ENCODE measurements at regions of chr10 and their contacts with region 1.

Region 1: DNA sequence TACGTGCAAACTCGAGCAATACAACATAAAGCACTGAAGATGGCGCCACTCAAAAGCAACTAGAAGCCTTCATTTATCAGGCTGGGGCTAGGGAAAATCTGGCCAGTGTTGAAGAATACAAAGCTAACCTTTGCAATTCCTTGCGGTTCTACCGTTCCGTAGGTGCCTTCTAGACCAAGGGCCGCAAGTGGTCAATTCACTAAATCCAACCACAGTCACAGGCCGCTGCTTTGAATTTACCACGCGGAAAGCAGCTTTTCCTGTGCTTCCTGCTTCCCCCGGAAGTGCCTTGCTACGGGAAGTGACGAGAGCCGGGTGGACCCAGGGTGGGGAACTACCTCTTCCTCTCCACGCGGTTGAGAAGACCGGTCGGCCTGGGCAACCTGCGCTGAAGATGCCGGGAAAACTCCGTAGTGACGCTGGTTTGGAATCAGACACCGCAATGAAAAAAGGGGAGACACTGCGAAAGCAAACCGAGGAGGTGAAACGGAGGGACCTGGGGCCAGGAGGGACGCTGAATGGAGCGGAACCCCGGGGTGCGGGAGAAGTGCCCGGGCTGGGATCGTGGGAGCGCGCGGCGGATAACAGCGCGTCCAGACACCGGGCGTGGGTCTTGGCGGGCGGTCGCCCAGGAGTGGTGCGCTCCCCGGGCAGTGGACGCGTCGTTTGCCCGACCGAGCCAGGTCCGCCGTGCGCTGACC is at the start of gene DDX21:
- DNase-seq: peak; percentile 94
- H3K4me3 Mint-ChIP-seq: peak within 1 kb of the TSS; percentile 97
- H3K27ac Mint-ChIP-seq: peak within 1 kb of the TSS; percentile 99
- H3K4me1 Mint-ChIP-seq: peaks cover 39% of the 10 kb centered on the region
- H3K27me3 Mint-ChIP-seq: no peaks in the 10 kb centered on the region
- total RNA-seq, gene DDX21: 156 to 158 TPM

Region 2: DNA sequence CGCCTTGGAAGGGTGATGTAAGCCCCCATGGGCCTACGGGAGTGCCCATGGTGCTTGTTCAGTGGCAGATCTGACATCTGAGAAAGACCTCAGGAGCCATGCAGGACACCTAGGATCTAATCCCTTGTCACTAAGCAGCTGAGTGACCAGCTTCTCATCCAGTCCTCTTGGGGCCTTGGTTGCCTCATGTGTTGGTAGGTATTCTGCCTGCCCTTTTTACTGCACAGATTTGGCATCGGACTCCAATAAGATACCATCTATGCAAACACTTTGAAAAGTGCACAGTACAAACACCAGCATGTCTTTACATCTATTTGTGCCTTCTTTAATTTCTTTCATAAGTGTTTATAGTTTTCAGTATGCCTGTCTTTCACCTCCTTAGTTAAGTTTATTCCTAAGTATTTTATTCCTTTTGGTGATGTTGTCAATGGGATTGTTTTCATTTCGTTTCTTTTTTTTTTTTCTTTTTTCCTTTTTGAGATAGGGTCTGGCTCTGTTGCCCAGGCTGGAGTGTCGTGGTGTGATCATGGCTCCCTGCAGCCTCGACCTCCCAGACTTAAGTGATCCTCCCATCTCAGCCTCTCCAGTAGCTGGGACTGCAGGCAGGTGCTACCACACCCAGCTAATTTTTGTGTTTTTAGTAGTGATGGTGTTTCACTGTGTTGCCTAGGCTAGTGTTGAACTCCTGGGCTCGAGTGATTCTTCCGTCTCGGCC is 118.2 kb before region 1 on chr10:
- CTCF ChIA-PET with region 1: no interaction called
- POLR2A ChIA-PET with region 1: no interaction called
- intact Hi-C with region 1: no loop called
- DNase-seq: no peak
- H3K4me3 Mint-ChIP-seq: no peak overlapping the region
- H3K27ac Mint-ChIP-seq: no peak overlapping the region
- H3K4me1 Mint-ChIP-seq: no peaks in the 10 kb centered on the region
- H3K27me3 Mint-ChIP-seq: no peaks in the 10 kb centered on the region

Region 3: GRCh38 chr10:68988530-68989316 is 32.7 kb after region 1 on chr10 and contains the start of gene KIFBP:
- CTCF ChIA-PET with region 1: interaction called, 11 read pairs
- POLR2A ChIA-PET with region 1: interaction called, 19 read pairs
- intact Hi-C with region 1: loop called (anchors 1 kb)
- DNase-seq: peak; percentile 93
- H3K4me3 Mint-ChIP-seq: peak within 1 kb of the TSS; percentile 92
- H3K27ac Mint-ChIP-seq: peak within 1 kb of the TSS; percentile 83
- H3K4me1 Mint-ChIP-seq: peaks cover 49% of the 10 kb centered on the region
- H3K27me3 Mint-ChIP-seq: no peaks in the 10 kb centered on the region
- total RNA-seq, gene KIFBP: 23.0 to 25.2 TPM

Region 4: DNA sequence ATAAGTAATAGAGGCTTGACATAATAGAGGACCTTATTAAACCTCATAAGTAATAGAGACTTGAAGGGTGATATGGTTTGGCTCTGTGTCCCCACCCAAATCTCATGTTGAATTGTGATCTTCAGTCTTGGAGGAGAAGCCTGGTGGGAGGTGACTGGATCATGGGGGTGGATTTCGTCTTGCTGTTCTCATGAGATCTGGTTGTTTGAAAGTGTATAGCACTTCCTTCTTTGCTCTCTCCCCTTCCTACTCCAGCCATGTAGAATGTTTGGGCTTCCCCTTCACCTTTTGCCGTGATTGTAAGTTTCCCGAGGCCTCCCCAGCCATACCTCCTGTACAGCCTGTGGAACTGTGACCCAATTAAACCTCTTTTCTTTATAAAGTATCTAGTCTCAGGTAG is 41.2 kb after region 1 on chr10:
- CTCF ChIA-PET with region 1: no interaction called
- POLR2A ChIA-PET with region 1: no interaction called
- intact Hi-C with region 1: loop called (anchors 1 kb)
- DNase-seq: peak; percentile 33
- H3K4me3 Mint-ChIP-seq: peak overlapping the region; percentile 40
- H3K27ac Mint-ChIP-seq: peak overlapping the region; percentile 94
- H3K4me1 Mint-ChIP-seq: peaks cover 52% of the 10 kb centered on the region
- H3K27me3 Mint-ChIP-seq: no peaks in the 10 kb centered on the region

Region 5: GRCh38 chr10:69056129-69056528 is 100.1 kb after region 1 on chr10:
- CTCF ChIA-PET with region 1: no interaction called
- POLR2A ChIA-PET with region 1: no interaction called
- intact Hi-C with region 1: no loop called
- DNase-seq: peak; percentile 50
- H3K4me3 Mint-ChIP-seq: no peak overlapping the region
- H3K27ac Mint-ChIP-seq: peak overlapping the region; percentile 24
- H3K4me1 Mint-ChIP-seq: peaks cover 52% of the 10 kb centered on the region
- H3K27me3 Mint-ChIP-seq: no peaks in the 10 kb centered on the region

Region 6: DNA sequence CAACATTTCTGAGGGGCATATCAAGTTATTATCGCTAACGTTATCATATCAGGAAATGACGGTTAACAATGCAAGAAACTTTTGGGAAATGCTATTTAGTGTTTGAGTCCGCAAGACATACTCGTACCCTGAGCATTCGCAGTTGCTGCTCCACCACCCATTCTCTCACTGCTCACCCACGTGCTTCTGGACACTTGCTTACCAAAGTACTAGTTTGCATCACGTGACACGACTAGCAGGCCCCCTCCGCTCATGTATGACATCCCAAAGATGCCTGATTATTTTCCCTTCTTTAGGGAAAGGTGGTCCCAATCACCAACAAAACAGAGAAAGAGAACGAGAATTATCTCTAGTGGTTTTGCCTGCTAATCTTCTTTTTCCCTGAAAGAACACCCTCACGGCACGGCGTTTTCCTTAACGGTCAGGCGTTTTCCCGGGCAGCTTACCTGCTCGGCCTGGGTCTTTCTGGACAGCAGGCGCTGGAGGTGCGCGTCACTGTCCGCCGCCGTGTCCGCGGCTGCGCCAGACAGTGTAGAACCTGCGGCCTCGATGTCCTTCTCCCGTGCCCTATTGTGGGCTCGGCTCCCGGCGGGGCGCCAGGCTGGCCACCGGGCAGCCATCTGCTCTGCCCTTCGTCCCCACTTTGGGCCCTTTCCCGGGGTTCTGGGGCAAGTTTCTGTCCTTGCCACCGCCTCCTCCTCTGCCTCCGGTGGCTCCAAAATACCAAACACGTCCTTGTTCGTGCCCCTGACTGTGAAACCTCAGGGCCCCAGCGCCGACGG is 224.0 kb after region 1 on chr10 and contains the start of gene SUPV3L1:
- CTCF ChIA-PET with region 1: no interaction called
- POLR2A ChIA-PET with region 1: no interaction called
- intact Hi-C with region 1: loop called (anchors 1 kb)
- DNase-seq: peak; percentile 91
- H3K4me3 Mint-ChIP-seq: peak within 1 kb of the TSS; percentile 87
- H3K27ac Mint-ChIP-seq: peak within 1 kb of the TSS; percentile 100
- H3K4me1 Mint-ChIP-seq: peaks cover 45% of the 10 kb centered on the region
- H3K27me3 Mint-ChIP-seq: no peaks in the 10 kb centered on the region
- total RNA-seq, gene SUPV3L1: 45.0 to 47.6 TPM

Measured in activated CD4-positive, alpha-beta memory T cell treated with anti-CD3 and anti-CD28 coated beads for 36 hours (primary cell).